CD4-positive, alpha-beta T cell (primary cell): ENCODE measurements at regions of chr10 and their contacts with region 1.

Region 1: DNA sequence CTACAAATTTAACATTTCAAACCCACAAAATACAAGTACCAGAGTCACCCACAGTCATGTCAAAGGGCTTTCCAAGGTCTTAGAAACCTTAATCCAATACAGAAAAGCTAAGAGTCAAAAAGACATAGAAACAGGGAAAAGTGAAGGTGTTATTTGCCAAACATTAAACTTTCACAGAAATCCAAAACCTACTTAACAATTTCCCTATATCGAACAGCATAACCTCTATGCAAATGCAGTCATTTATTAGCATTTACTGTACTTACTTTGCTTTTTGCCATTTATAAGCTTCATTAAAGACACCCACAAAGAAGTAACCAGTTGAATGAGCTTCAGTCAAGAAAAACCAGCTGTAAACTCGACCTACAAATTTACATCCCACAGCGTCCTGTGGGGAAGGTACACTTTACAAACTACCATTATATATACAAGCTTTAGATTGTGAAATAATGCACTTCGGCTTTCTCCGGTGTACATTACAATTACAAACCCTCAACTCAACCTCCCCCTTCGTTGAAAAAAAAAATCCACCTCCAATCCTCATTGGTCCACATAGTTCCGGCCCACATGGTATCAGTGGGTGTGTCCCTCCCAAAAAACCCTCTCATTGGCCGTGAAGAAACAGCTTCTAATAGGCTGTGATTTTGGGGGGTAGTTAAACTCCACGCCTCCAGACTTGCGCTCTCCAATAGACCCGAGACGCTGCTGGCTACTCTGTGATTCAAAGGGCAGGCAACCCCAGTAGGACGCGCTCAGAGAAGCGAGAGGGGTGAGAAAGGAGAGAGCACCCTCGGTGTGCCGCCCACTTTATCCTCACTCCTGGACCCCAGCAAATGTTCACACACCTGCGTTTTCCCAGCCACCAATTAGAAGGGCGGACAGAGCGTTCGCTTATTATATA is 1.4 kb downstream of the PANK1 start:
- DNase-seq: peak; percentile 7 to 87 (median 48)
- ATAC-seq: peak; percentile 84
- H3K4me3 ChIP-seq: peak overlapping the region; percentile 77
- H3K4me3 Mint-ChIP-seq: no peak overlapping the region
- H3K27ac ChIP-seq: no peak overlapping the region
- H3K27ac Mint-ChIP-seq: no peak overlapping the region
- H3K4me1 ChIP-seq: peaks cover 16% of the 10 kb centered on the region
- H3K4me1 Mint-ChIP-seq: peaks cover 8% of the 10 kb centered on the region
- H3K27me3 ChIP-seq: no peaks in the 10 kb centered on the region
- H3K27me3 Mint-ChIP-seq: no peaks in the 10 kb centered on the region
- CTCF ChIP-seq: no peak

Region 2: DNA sequence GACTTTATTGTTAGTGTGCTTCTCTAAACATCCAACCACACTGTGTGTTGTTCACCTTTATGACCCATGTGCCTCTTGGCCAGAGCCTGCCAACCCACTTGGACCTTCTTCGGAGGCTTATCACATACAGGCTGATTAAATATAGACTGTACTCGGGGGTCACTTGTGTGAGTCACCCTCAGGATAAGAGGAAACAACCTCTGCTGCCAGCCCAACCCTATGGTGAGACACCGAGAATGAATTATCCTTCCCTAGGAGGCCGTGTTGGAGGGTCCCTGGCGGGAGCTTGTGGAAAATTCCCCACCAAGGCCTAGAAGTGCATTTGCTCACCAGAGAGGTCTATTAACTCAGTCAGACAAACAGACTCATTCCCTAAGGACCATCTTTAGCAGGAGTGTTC is 590.1 kb before region 1 on chr10:
- CTCF ChIA-PET with region 1: no interaction called
- POLR2A ChIA-PET with region 1: no interaction called
- intact Hi-C with region 1: no loop called
- DNase-seq: no peak
- ATAC-seq: no peak
- H3K4me3 ChIP-seq: no peak overlapping the region
- H3K4me3 Mint-ChIP-seq: no peak overlapping the region
- H3K27ac ChIP-seq: no peak overlapping the region
- H3K27ac Mint-ChIP-seq: no peak overlapping the region
- H3K4me1 ChIP-seq: no peaks in the 10 kb centered on the region
- H3K4me1 Mint-ChIP-seq: no peaks in the 10 kb centered on the region
- H3K27me3 ChIP-seq: no peaks in the 10 kb centered on the region
- H3K27me3 Mint-ChIP-seq: no peaks in the 10 kb centered on the region
- CTCF ChIP-seq: no peak

Region 3: DNA sequence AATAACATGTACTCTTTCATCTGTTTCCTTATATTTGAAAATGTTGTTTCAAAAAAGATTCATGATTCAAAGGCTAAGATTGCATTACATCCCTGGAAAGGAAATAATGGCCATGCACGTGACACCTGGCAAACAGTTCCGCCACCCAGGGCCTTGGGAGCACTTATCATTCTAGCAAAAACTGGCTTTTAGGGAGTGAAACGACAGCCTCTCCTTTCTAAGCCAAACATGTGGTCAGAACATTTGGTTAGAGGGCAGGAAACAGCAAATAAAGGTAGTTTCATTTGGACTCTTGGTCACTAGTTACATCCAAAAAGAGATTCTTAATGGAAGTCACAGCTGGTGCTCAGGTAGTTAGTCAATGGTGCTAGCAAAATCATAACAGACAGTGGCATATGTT is 569.6 kb before region 1 on chr10:
- CTCF ChIA-PET with region 1: no interaction called
- POLR2A ChIA-PET with region 1: no interaction called
- intact Hi-C with region 1: no loop called
- DNase-seq: no peak
- ATAC-seq: no peak
- H3K4me3 ChIP-seq: no peak overlapping the region
- H3K4me3 Mint-ChIP-seq: no peak overlapping the region
- H3K27ac ChIP-seq: no peak overlapping the region
- H3K27ac Mint-ChIP-seq: no peak overlapping the region
- H3K4me1 ChIP-seq: no peaks in the 10 kb centered on the region
- H3K4me1 Mint-ChIP-seq: no peaks in the 10 kb centered on the region
- H3K27me3 ChIP-seq: no peaks in the 10 kb centered on the region
- H3K27me3 Mint-ChIP-seq: peaks cover 7% of the 10 kb centered on the region
- CTCF ChIP-seq: no peak

Region 4: DNA sequence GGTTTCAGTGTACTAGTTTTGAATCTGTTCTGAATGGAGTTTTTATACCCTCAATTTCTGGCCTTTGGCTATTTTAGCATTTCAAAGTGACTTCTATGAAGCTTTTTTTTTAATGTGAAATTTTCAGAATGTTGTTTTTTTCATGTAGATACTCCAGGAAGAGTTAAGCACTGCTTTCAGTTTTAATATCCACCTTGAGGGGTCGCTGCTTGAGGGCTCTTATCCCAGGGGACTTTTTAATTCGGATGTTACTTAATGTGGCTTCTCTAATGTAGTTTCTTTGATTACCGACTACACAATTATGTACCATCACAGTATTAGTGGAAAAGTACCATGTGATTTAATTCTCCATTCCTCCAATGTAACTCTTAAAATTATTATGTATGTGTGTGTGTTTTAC is 224.1 kb before region 1 on chr10:
- CTCF ChIA-PET with region 1: no interaction called
- POLR2A ChIA-PET with region 1: interaction called, 6 read pairs
- intact Hi-C with region 1: loop called in 1 of 2 experiments (anchors 5 kb)
- DNase-seq: peak in 4 of 14 experiments; percentile 21 to 78 (median 60)
- ATAC-seq: peak; percentile 28
- H3K4me3 ChIP-seq: no peak overlapping the region
- H3K4me3 Mint-ChIP-seq: peak overlapping the region; percentile 63
- H3K27ac ChIP-seq: no peak overlapping the region
- H3K27ac Mint-ChIP-seq: peak overlapping the region; percentile 75
- H3K4me1 ChIP-seq: peaks cover 27% of the 10 kb centered on the region
- H3K4me1 Mint-ChIP-seq: peaks cover 60% of the 10 kb centered on the region
- H3K27me3 ChIP-seq: no peaks in the 10 kb centered on the region
- H3K27me3 Mint-ChIP-seq: no peaks in the 10 kb centered on the region
- CTCF ChIP-seq: peak; percentile 31